ENCODE measurements at regions of chr3 and their contacts with region 1.

Region 1: GRCh38 chr3:56825567-56826438 is 24.1 kb upstream of the ARHGEF3 start:
- DNase-seq: no peak
- ATAC-seq: no peak
- H3K4me3 ChIP-seq: no peak overlapping the region
- H3K4me3 Mint-ChIP-seq: no peak overlapping the region
- H3K27ac ChIP-seq: no peak overlapping the region
- H3K27ac Mint-ChIP-seq: peak overlapping the region in 5 of 9 donors; percentile 26 to 61 (median 30)
- H3K4me1 ChIP-seq: peaks cover 5 to 18% of the 10 kb centered on the region in 2 donors
- H3K4me1 Mint-ChIP-seq: peaks cover 31 to 64% (median 41%) of the 10 kb centered on the region in 7 donors
- H3K27me3 ChIP-seq: no peaks in the 10 kb centered on the region
- H3K27me3 Mint-ChIP-seq: no peaks in the 10 kb centered on the region

Region 2: GRCh38 chr3:56839784-56840715 is 14.2 kb after region 1 on chr3:
- CTCF ChIA-PET with region 1: interaction called, 3 read pairs
- POLR2A ChIA-PET with region 1: interaction called, 3 read pairs
- intact Hi-C with region 1: loop called in 1 of 2 experiments (anchors 2 kb)
- DNase-seq: no peak
- ATAC-seq: no peak
- H3K4me3 ChIP-seq: no peak overlapping the region
- H3K4me3 Mint-ChIP-seq: no peak overlapping the region
- H3K27ac ChIP-seq: no peak overlapping the region
- H3K27ac Mint-ChIP-seq: no peak overlapping the region
- H3K4me1 ChIP-seq: no peaks in the 10 kb centered on the region
- H3K4me1 Mint-ChIP-seq: peaks cover 8 to 40% (median 31%) of the 10 kb centered on the region in 7 donors
- H3K27me3 ChIP-seq: no peaks in the 10 kb centered on the region
- H3K27me3 Mint-ChIP-seq: no peaks in the 10 kb centered on the region

Region 3: DNA sequence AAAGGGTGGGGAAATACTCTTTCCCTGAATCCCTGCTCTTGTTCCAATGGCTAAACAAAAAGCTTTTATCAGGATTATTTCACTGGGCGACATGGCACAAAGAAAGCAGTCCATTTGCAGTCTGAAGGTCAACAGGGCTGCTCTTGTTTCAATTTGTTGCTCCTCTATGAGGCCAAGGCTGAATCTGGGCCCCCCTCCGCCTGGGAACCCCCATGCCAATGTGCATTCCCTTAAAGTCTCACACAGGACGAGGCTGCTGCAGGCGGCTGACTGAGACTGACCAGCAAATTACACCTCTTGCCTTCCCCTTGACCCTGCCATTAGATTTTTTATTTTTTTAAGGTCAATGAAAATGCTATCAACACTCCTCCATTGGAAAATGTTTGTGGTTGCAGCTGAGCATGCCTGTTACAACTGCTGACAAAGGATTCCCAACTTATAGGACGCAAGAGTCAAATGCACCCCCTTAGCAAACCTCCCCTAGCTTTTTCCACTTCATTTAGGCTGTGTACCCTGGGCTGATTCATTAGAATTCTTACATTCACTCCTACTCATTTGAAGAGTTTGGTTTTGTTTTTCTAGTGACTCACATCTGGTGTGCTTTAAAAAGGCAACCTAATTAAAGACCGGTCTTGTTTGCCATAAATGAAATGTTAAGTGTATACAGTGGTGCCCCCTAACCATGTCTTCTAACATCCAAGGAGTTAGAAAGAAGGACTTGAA is 36.7 kb after region 1 on chr3:
- CTCF ChIA-PET with region 1: no interaction called
- POLR2A ChIA-PET with region 1: no interaction called
- intact Hi-C with region 1: loop called in 1 of 2 experiments (anchors 5 kb)
- DNase-seq: no peak
- ATAC-seq: peak; percentile 10
- H3K4me3 ChIP-seq: no peak overlapping the region
- H3K4me3 Mint-ChIP-seq: peak overlapping the region in 3 of 10 donors; percentile 27 to 42 (median 41)
- H3K27ac ChIP-seq: no peak overlapping the region
- H3K27ac Mint-ChIP-seq: peak overlapping the region in 5 of 9 donors; percentile 23 to 66 (median 36)
- H3K4me1 ChIP-seq: peaks cover 13 to 21% of the 10 kb centered on the region in 2 donors
- H3K4me1 Mint-ChIP-seq: peaks cover 38 to 75% (median 67%) of the 10 kb centered on the region in 7 donors
- H3K27me3 ChIP-seq: no peaks in the 10 kb centered on the region
- H3K27me3 Mint-ChIP-seq: no peaks in the 10 kb centered on the region

Region 4: GRCh38 chr3:57046101-57046765 is 220.4 kb after region 1 on chr3:
- CTCF ChIA-PET with region 1: no interaction called
- POLR2A ChIA-PET with region 1: no interaction called
- intact Hi-C with region 1: no loop called
- DNase-seq: no peak
- ATAC-seq: no peak
- H3K4me3 ChIP-seq: no peak overlapping the region
- H3K4me3 Mint-ChIP-seq: no peak overlapping the region
- H3K27ac ChIP-seq: no peak overlapping the region
- H3K27ac Mint-ChIP-seq: no peak overlapping the region
- H3K4me1 ChIP-seq: no peaks in the 10 kb centered on the region
- H3K4me1 Mint-ChIP-seq: no peaks in the 10 kb centered on the region
- H3K27me3 ChIP-seq: no peaks in the 10 kb centered on the region
- H3K27me3 Mint-ChIP-seq: peaks cover 0 to 19% (median 11%) of the 10 kb centered on the region in 5 donors